A673 (cell line): ENCODE measurements at regions of chr14 and their contacts with region 1.

Region 1: DNA sequence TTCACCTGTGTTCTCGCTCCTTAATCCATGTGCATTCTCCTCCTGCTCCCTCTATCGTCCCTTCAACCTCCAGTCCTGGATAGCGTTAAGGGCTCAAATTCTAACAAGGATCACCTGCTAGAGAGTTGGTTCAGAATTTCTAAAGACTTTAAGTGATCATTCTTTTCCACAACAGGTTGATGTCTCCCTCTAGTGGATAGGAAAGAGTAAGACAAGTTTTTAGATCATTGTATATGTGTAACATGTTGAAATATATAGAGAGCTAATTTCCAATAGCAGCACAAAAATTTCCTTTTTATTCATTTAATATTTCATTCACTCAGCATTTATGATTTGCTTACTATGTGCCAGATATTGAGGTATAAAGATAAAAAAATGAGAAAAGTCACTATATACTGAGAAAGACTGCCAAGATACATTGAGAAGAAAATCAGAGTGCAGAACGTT is 9.3 kb upstream of the ESR2 start:
- DNase-seq: peak; percentile 81
- H3K4me3 ChIP-seq: no peak overlapping the region
- H3K27ac ChIP-seq: no peak overlapping the region
- H3K4me1 ChIP-seq: no peaks in the 10 kb centered on the region
- H3K27me3 ChIP-seq: no peaks in the 10 kb centered on the region
- CTCF ChIP-seq: peak; percentile 80

Region 2: DNA sequence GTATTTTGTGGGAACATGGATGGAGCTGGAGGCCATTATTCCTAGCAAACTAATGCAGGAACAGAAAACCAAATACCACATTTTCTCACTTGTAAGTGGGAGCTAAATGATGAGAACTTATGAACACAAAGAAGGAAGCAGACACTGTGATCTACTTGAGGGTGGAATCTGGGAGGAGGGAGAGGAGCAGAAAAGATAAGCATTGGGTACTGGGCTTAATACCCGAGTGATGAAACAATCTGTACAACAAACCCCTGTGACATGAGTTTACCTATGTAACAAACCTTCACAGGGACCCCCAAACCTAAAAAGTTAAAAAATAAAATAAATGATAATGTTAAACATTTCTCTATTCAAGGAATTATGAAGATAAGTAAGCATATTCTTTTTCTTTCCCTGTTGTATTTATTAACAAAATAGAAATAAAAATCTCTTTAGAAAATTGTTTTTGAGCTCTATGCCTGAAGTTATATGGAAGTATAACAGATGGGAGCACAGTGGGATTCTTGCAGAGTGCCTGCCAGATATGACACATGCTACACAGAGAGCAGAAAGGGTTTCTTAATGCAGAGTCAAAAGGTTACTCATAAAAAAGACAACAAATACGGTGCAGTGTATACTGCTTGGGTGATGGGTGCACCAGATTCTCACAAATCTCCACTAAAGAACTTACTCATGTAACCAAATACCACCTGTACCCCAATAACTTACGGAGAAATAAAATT is 502.7 kb before region 1 on chr14:
- CTCF ChIA-PET with region 1: interaction called, 6 read pairs
- POLR2A ChIA-PET with region 1: no interaction called
- intact Hi-C with region 1: loop called (anchors 2 kb)
- DNase-seq: no peak
- H3K4me3 ChIP-seq: no peak overlapping the region
- H3K27ac ChIP-seq: no peak overlapping the region
- H3K4me1 ChIP-seq: peaks cover 6% of the 10 kb centered on the region
- H3K27me3 ChIP-seq: no peaks in the 10 kb centered on the region
- CTCF ChIP-seq: no peak

Region 3: GRCh38 chr14:64012720-64013119 is 290.8 kb before region 1 on chr14:
- CTCF ChIA-PET with region 1: interaction called, 3 read pairs
- POLR2A ChIA-PET with region 1: no interaction called
- intact Hi-C with region 1: loop called (anchors 5 kb)
- DNase-seq: no peak
- H3K4me3 ChIP-seq: no peak overlapping the region
- H3K27ac ChIP-seq: no peak overlapping the region
- H3K4me1 ChIP-seq: no peaks in the 10 kb centered on the region
- H3K27me3 ChIP-seq: no peaks in the 10 kb centered on the region
- CTCF ChIP-seq: no peak

Region 4: GRCh38 chr14:65035049-65035448 is 731.6 kb after region 1 on chr14:
- CTCF ChIA-PET with region 1: no interaction called
- POLR2A ChIA-PET with region 1: no interaction called
- intact Hi-C with region 1: no loop called
- DNase-seq: no peak
- H3K4me3 ChIP-seq: no peak overlapping the region
- H3K27ac ChIP-seq: no peak overlapping the region
- H3K4me1 ChIP-seq: no peaks in the 10 kb centered on the region
- H3K27me3 ChIP-seq: no peaks in the 10 kb centered on the region
- CTCF ChIP-seq: no peak